Esophagus squamous epithelium (tissue), 5 donors: ENCODE measurements at regions of chr11 and their contacts with region 1.

Region 1: DNA sequence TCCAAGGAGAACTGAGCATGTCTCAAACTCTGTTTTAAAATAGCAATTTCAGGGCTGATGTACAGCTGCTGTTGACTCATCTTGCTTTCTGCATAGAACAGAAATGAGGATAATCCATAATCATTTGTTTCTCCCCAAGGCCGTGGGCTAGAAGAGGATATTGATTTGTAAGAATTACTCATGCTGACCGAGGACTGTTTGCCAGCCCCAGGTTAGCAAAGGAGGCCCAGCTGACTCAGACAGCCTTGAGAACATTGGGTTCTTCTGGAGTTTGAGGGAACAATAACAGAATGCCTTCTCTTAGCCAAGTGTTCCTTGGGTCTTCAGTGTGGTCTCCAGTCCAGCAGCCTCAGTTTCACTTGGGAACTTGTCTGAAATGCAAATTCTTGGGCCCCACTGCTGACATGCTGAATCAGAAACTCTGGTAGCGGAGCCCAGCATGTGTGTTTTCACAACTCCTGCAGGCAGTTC is 92.0 kb downstream of the ZC3H12C start:
- DNase-seq: no peak
- H3K4me3 ChIP-seq: no peak overlapping the region
- H3K27ac ChIP-seq: no peak overlapping the region
- H3K4me1 ChIP-seq: peaks cover 0 to 11% (median 0%) of the 10 kb centered on the region in 3 donors
- H3K27me3 ChIP-seq: no peaks in the 10 kb centered on the region
- CTCF ChIP-seq: no peak
- POLR2A ChIP-seq: no peak

Region 2: GRCh38 chr11:109956124-109956793 is 228.9 kb before region 1 on chr11:
- intact Hi-C with region 1: loop called (anchors 10 kb)
- DNase-seq: no peak
- H3K4me3 ChIP-seq: no peak overlapping the region
- H3K27ac ChIP-seq: no peak overlapping the region
- H3K4me1 ChIP-seq: peaks cover 0 to 4% (median 0%) of the 10 kb centered on the region in 3 donors
- H3K27me3 ChIP-seq: peaks cover 0 to 3% (median 0%) of the 10 kb centered on the region in 4 donors
- CTCF ChIP-seq: no peak
- POLR2A ChIP-seq: no peak

Region 3: DNA sequence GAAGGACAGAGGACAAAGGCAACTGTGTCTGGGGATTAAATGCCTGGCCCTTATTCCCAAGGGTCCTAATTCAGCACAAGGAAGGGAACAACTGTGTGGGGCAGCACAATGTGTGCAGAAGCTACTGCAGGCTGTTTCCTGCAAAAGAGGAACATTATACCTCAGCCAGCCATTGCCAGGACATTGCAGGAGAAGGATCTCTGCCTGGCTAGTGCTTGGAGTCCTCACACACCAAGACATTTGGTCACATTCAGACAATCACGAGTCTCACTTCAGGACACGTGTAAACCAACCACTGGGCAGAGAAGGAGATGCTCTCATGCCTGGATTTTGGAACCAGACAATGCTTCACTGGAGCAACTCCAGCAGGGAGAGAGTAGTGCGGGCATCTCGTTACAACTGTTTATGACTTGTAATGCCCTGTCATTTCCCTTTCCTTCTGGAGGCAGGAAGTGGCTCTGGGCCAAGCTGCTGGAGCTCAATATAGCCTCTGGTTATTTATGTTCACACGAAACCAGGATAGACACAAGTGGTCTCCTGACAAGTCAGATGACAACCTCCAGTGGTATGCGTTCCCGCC is 115.9 kb before region 1 on chr11:
- intact Hi-C with region 1: no loop called
- DNase-seq: no peak
- H3K4me3 ChIP-seq: no peak overlapping the region
- H3K27ac ChIP-seq: peak overlapping the region in 3 of 4 donors; percentile 28 to 59 (median 53)
- H3K4me1 ChIP-seq: peaks cover 0 to 10% (median 0%) of the 10 kb centered on the region in 3 donors
- H3K27me3 ChIP-seq: no peaks in the 10 kb centered on the region
- CTCF ChIP-seq: no peak
- POLR2A ChIP-seq: no peak

Region 4: GRCh38 chr11:110296226-110297075 is 111.3 kb after region 1 on chr11 and contains the start of gene RDX:
- intact Hi-C with region 1: no loop called
- DNase-seq: no peak
- H3K4me3 ChIP-seq: peak within 1 kb of the TSS; percentile 78 to 100 (median 91)
- H3K27ac ChIP-seq: peak within 1 kb of the TSS; percentile 95 to 99 (median 99)
- H3K4me1 ChIP-seq: peaks cover 23 to 58% (median 35%) of the 10 kb centered on the region in 3 donors
- H3K27me3 ChIP-seq: no peaks in the 10 kb centered on the region
- CTCF ChIP-seq: peak in 2 of 6 experiments; percentile 4 to 5
- POLR2A ChIP-seq: peak in 2 of 4 donors; percentile 33 to 63
- total RNA-seq, gene RDX: 35.3 to 62.9 (median 51.7) TPM